Mammary epithelial cell (primary cell): ENCODE measurements at regions of chr1 and their contacts with region 1.

Region 1: DNA sequence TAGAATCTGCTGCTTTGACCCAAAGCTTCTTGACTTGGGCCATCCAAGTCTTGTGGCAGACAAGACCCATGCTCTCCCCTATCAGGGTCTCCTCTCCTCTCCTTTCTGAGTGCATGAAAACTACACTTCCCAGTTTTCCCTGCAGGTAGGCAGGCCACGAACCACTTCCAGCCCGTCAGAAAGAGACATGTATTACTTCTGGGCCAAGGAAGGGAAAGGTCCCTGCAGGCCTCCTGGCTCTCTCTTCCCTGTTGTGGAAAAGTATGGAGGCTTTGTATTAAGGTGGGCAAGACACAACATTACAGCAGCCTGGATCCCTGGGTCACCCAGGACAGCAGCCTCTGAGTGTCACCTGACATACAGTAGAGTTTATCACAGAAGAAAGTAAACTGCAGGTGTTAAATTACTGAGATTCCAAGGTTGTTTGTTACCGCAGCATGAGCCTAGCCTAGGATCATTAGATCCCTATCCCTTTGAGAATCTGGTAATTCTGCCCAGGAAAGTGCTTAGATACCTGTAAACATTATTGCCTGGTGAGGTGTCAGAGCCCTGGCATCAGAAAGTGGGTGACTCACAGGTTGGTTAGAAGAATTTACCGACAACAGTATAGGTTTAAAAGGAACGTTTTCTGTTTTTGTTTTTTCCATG is 717.3 kb downstream of the MATN1 start:
- DNase-seq: peak; percentile 77
- H3K4me3 ChIP-seq: no peak overlapping the region
- H3K27ac ChIP-seq: no peak overlapping the region
- H3K4me1 ChIP-seq: peaks cover 15% of the 10 kb centered on the region
- H3K27me3 ChIP-seq: no peaks in the 10 kb centered on the region
- CTCF ChIP-seq: no peak

Region 2: DNA sequence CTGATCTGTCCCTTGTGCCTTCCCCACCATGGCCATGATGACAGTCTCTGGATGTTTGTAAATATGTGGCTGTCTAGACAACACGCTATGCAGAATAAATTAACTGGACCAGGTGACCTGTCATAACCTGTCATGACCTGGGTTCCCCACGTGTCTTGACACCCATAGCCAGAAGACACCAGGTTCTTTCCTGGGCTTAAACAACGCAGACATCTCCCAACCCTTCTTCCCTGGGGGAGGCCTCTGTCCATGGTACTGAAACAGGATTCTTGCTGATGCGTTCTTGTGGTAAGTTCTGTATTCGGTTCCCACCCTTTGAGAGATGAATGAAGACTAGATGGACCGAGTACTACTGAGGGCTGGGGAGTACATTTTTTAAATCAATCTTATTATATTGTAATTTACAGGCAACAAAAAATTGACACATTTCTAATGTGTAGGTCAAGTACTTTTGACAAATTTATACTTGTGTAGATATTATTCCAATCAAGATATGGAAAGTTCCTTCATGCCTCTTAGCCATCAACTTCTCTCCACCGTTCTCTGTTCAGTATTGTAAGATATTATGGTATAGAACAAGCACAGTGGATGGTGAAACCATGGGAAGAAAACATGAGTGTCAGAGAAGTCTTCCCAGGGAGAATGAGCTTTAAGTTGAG is 30.9 kb before region 1 on chr1:
- CTCF ChIA-PET with region 1: no interaction called
- dilution Hi-C with region 1: no loop called
- in situ Hi-C with region 1: no loop called
- intact Hi-C with region 1: loop called (anchors 2 kb)
- DNase-seq: peak; percentile 32
- H3K4me3 ChIP-seq: no peak overlapping the region
- H3K27ac ChIP-seq: no peak overlapping the region
- H3K4me1 ChIP-seq: peaks cover 9% of the 10 kb centered on the region
- H3K27me3 ChIP-seq: no peaks in the 10 kb centered on the region
- CTCF ChIP-seq: no peak

Region 3: GRCh38 chr1:30068787-30069472 is 62.8 kb after region 1 on chr1:
- CTCF ChIA-PET with region 1: no interaction called
- dilution Hi-C with region 1: no loop called
- in situ Hi-C with region 1: no loop called
- intact Hi-C with region 1: no loop called
- DNase-seq: peak; percentile 34
- H3K4me3 ChIP-seq: no peak overlapping the region
- H3K27ac ChIP-seq: no peak overlapping the region
- H3K4me1 ChIP-seq: peaks cover 9% of the 10 kb centered on the region
- H3K27me3 ChIP-seq: no peaks in the 10 kb centered on the region
- CTCF ChIP-seq: no peak

Region 4: DNA sequence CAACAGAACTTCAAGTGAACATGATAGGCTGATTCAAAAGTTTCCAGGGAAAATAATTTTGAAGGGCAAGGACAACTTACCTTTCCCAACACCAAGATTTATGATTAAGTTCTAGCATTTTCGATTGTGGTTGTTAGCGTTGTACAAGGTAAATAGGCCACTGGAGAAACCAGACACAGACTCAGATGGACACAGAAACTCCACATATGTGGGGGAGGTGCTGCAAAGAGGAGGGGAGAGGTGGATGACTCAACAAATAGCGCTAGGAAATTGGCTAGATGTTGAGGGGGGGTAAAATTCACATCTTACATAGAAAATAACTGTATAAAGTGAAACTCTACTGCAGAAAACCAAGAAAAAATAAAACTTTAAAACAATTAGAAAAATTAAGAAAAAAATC is 152.9 kb after region 1 on chr1:
- CTCF ChIA-PET with region 1: no interaction called
- dilution Hi-C with region 1: no loop called
- in situ Hi-C with region 1: no loop called
- intact Hi-C with region 1: no loop called
- DNase-seq: no peak
- H3K4me3 ChIP-seq: no peak overlapping the region
- H3K27ac ChIP-seq: no peak overlapping the region
- H3K4me1 ChIP-seq: no peaks in the 10 kb centered on the region
- H3K27me3 ChIP-seq: no peaks in the 10 kb centered on the region
- CTCF ChIP-seq: no peak